PC-3 (cell line): ENCODE measurements at regions of chr6 and their contacts with region 1.

Region 1: GRCh38 chr6:143260857-143261256 is 189.6 kb downstream of the ADAT2 start:
- DNase-seq: peak; percentile 64
- ATAC-seq: peak; percentile 90
- H3K4me3 ChIP-seq: no peak overlapping the region; the same call in 1 of the 2 replicates
- H3K27ac ChIP-seq: peak overlapping the region; percentile 63
- H3K4me1 ChIP-seq: peaks cover 12% of the 10 kb centered on the region
- H3K27me3 ChIP-seq: no peaks in the 10 kb centered on the region
- CTCF ChIP-seq: no peak

Region 2: DNA sequence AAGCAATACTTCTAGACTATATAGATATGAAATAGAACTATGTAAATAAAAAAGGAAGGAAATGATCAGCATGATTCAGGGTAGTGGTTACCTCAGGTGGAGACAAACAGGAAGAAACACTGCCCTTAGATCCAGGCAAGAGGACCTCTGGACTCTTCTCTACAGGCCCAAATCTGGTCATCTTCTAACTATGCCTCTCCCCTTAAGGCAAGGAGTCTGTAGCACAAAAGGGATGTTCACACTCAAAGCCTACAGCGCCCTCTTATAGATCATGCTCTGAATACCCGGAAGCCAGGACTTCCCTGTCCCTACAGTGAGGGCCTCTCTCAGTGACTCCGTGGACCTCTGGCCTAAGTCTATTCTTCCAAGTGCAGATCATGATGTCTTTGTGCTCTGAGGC is 285.5 kb before region 1 on chr6:
- CTCF ChIA-PET with region 1: interaction called, 15 read pairs
- POLR2A ChIA-PET with region 1: no interaction called
- intact Hi-C with region 1: no loop called
- DNase-seq: peak; percentile 5
- ATAC-seq: peak; percentile 55
- H3K4me3 ChIP-seq: no peak overlapping the region
- H3K27ac ChIP-seq: no peak overlapping the region
- H3K4me1 ChIP-seq: no peaks in the 10 kb centered on the region
- H3K27me3 ChIP-seq: no peaks in the 10 kb centered on the region
- CTCF ChIP-seq: no peak